Lower leg skin (tissue), 4 donors: ENCODE measurements at regions of chr2 and their contacts with region 1.

Region 1: GRCh38 chr2:121722479-121722878 is 14.2 kb downstream of the NIFK start:
- DNase-seq: peak; percentile 36 to 38
- H3K4me3 ChIP-seq: no peak overlapping the region
- CTCF ChIP-seq: no peak
- POLR2A ChIP-seq: no peak

Region 2: DNA sequence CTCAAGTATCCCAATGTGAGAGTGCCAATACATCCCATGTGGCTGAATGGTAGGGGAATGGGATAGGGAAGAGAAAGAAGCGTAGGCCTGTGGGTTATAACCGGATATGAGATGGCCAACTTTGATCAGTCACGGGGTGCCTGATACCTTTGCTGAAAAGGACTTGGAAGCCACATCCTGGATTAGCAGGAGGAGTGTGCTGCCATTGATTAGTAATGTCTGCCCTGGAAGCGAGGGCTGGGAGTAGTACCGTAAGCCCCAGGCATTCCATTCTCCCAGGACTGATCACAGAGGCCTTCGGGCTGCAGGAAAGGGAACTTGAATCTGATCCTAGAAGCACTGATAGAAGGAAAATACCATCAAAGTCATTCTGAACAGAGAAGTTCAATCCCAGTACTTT is 656.0 kb before region 1 on chr2:
- intact Hi-C with region 1: no loop called
- DNase-seq: no peak
- H3K4me3 ChIP-seq: no peak overlapping the region
- CTCF ChIP-seq: no peak
- POLR2A ChIP-seq: no peak

Region 3: GRCh38 chr2:121530212-121530705 is 192.2 kb before region 1 on chr2:
- intact Hi-C with region 1: loop called (anchors 10 kb)
- DNase-seq: peak; percentile 70 to 97
- H3K4me3 ChIP-seq: peak overlapping the region; percentile 58
- CTCF ChIP-seq: no peak
- POLR2A ChIP-seq: no peak